ENCODE measurements at regions of chr2 and their contacts with region 1.

Region 1: DNA sequence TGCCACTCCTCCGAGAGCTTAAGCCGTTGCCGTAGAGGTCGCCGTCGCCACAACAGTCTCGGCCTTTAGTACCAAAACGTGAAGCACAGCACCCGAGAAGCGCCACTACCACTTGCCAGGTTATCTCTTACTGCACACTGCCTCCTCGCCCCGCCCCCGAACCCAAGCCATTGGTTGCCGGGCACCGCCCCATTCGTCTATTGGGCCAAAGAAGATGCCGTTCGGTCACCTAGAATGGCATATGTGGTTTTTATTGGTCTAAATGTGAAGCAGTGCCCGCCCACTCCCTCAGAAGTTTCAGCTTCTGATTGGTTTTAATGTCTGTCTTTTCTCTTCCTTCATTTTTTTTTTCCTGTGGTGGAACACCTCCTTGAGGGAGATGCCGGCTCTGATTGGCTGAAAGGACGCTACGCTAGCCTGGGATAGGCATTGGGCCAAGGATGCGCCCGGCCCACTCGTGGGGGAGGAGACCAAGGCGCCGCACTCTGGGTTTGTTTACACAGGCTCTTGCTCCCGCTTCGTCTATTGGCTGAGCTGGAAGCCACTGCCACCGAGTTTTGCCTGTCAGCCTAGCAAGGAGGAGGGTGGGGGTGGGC is at the start of gene PAIP2B:
- DNase-seq: peak; percentile 99
- H3K4me3 Mint-ChIP-seq: peak within 1 kb of the TSS; percentile 99
- H3K27ac Mint-ChIP-seq: peak within 1 kb of the TSS; percentile 85
- H3K4me1 Mint-ChIP-seq: peaks cover 19% of the 10 kb centered on the region
- H3K27me3 Mint-ChIP-seq: no peaks in the 10 kb centered on the region
- total RNA-seq, gene PAIP2B: 3.0 to 3.2 TPM

Region 2: DNA sequence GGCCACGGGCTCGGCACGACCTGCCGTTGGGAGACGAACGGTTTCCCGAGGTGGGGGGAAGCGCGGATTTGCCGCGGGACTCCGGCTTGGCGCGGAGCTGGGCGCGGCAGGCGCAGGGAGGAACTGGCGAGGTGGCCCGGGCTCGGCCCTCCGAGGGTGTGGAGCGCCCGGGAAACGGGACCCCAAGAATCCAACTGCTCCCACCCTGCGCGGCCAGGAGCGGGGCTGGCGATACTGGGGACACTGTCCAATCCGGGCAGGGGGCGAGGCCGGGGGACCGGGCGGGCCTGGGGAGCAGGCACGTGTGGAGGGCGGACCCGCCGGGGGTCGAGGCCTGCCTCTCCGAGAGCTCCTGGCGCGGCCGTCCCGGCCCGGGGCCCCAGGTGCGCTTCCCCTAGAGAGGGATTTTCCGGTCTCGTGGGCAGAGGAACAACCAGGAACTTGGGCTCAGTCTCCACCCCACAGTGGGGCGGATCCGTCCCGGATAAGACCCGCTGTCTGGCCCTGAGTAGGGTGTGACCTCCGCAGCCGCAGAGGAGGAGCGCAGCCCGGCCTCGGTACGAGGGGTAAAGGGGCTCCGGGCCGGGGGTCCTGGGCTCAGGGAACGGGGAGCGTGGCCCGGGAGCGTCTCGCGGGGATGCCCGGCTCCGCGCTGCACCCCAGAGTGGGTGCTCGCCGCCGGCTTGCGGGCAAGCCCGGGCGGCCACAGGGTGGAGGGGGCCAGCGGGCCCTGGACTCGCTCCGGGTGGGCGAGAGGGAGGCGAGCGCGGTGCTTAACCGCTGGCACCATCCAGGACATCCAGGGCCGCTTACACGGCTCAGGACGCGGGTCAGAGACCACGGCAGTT is 1485.2 kb before region 1 on chr2 and contains the start of gene ANXA4:
- CTCF ChIA-PET with region 1: no interaction called
- intact Hi-C with region 1: loop called (anchors 5 kb)
- DNase-seq: peak; percentile 78
- H3K4me3 Mint-ChIP-seq: peak within 1 kb of the TSS; percentile 75
- H3K27ac Mint-ChIP-seq: peak within 1 kb of the TSS; percentile 78
- H3K4me1 Mint-ChIP-seq: peaks cover 12% of the 10 kb centered on the region
- H3K27me3 Mint-ChIP-seq: no peaks in the 10 kb centered on the region
- total RNA-seq, gene ANXA4: 21.4 to 23.9 TPM

Region 3: DNA sequence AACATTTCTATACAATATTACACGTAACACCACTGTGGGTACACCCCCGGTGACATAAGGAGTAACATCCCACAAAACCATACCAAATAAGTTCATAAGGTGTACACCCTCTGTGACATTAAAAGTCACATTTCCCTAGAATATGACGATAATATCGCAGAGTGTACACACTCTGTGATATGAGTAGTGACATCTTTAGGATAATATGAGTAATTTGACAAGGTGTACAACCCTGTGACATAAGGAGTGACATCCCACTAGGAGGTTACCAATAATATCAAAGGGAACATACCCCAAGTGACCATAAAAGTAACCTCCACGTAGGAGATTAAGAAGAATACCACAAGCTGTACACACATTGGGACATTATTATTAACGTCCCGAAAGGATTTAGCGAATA is 208.4 kb before region 1 on chr2:
- CTCF ChIA-PET with region 1: no interaction called
- intact Hi-C with region 1: loop called (anchors 1 kb)
- DNase-seq: no peak
- H3K4me3 Mint-ChIP-seq: no peak overlapping the region
- H3K27ac Mint-ChIP-seq: no peak overlapping the region
- H3K4me1 Mint-ChIP-seq: peaks cover 8% of the 10 kb centered on the region
- H3K27me3 Mint-ChIP-seq: no peaks in the 10 kb centered on the region

Region 4: DNA sequence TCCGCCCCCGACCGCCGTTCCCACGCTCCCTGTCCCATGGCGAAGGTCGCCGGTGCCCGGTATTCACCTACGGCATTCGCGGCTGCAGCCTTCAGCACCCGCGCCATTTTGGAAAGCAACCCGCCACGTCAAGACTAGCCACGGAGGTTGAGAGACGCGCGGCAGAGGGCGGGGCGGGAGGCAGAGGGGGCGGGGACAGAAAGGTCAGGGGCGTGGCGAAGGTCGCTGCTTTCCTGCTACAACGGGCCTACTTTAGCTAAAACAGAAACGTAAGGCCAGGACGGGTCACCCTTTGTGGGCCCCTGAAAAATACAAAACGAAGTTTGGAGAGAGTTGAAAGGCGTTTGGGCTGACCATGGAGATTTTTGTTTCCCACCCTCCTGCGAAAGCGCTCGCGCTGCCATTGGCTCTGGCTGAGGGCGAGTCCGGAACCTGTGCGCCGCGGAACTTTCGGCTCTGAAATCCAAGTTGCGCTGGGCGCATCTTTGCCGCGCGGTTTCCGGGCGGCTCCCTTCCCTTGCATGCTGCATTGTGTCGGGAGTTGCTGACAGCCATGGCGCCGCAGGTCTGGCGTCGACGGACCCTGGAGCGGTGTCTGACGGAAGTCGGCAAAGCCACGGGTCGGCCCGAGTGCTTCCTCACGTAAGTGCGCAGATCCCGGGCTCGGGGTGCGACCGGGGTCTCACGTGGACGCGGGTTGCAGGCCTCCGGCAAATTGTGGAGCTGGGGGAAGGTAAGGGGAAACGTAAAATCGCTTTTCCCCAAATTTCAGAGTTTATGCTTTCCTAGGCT is 96.8 kb before region 1 on chr2 and contains the starts of genes MCEE and MPHOSPH10:
- CTCF ChIA-PET with region 1: no interaction called
- intact Hi-C with region 1: loop called (anchors 1 kb)
- DNase-seq: peak; percentile 94
- H3K4me3 Mint-ChIP-seq: no peak within 1 kb of the TSS
- H3K27ac Mint-ChIP-seq: no peak within 1 kb of the TSS
- H3K4me1 Mint-ChIP-seq: peaks cover 16% of the 10 kb centered on the region
- H3K27me3 Mint-ChIP-seq: no peaks in the 10 kb centered on the region
- total RNA-seq, gene MCEE: 14.0 to 15.8 TPM
- total RNA-seq, gene MPHOSPH10: 27.0 to 32.3 TPM

Region 5: GRCh38 chr2:71282495-71282894 is 55.4 kb after region 1 on chr2:
- CTCF ChIA-PET with region 1: no interaction called
- intact Hi-C with region 1: loop called (anchors 1 kb)
- DNase-seq: no peak
- H3K4me3 Mint-ChIP-seq: no peak overlapping the region
- H3K27ac Mint-ChIP-seq: no peak overlapping the region
- H3K4me1 Mint-ChIP-seq: peaks cover 5% of the 10 kb centered on the region
- H3K27me3 Mint-ChIP-seq: peaks cover 56% of the 10 kb centered on the region

Region 6: DNA sequence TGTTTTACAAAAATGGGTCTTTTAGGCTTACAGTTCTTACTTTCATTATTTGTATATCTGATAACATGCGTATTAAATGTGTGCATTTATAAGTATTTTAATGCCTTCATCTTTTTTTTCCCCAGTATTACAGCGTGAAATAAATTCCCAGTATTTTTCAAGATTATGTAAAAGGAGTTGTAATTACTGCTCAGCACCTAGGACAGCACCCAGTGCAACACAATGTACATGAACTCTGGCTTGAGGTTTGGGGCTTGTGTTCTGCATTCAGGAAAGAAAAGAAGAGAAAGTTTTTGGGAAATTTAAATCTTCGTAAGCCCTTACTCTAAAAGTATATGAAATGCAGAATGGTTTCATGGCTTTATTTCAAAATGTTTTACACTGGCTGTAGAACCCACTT is 121.2 kb after region 1 on chr2:
- CTCF ChIA-PET with region 1: no interaction called
- intact Hi-C with region 1: no loop called
- DNase-seq: peak; percentile 12
- H3K4me3 Mint-ChIP-seq: no peak overlapping the region
- H3K27ac Mint-ChIP-seq: no peak overlapping the region
- H3K4me1 Mint-ChIP-seq: peaks cover 60% of the 10 kb centered on the region
- H3K27me3 Mint-ChIP-seq: no peaks in the 10 kb centered on the region

Region 7: GRCh38 chr2:71452565-71452964 is 225.5 kb after region 1 on chr2:
- CTCF ChIA-PET with region 1: no interaction called
- intact Hi-C with region 1: loop called (anchors 10 kb)
- DNase-seq: peak; percentile 75
- H3K4me3 Mint-ChIP-seq: no peak overlapping the region
- H3K27ac Mint-ChIP-seq: no peak overlapping the region
- H3K4me1 Mint-ChIP-seq: peaks cover 15% of the 10 kb centered on the region
- H3K27me3 Mint-ChIP-seq: peaks cover 39% of the 10 kb centered on the region